ENCODE measurements at regions of chr1 and their contacts with region 1.

Region 1: GRCh38 chr1:45512641-45513054 is 9.0 kb downstream of the PRDX1 start:
- DNase-seq: peak; percentile 77
- ATAC-seq: peak; percentile 85
- H3K4me3 Mint-ChIP-seq: no peak overlapping the region
- H3K27ac Mint-ChIP-seq: no peak overlapping the region
- H3K4me1 Mint-ChIP-seq: peaks cover 11% of the 10 kb centered on the region
- H3K27me3 Mint-ChIP-seq: no peaks in the 10 kb centered on the region

Region 2: DNA sequence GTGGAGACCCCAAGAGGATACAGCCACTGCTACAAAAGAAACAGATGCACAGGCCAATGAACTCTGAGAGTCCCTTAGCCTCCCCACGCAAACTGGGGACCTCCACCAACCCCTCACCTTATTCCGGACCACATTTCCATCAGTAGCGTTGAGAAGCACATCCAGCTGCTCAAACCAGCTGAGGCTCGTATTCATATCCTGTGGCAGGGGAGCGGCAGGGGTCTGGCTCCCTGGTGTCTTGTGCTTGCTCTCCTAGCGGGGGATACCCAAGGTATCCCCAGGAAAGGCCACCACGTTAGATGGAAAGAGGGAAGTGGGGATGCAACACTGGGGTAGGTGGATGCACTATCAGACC is 13.3 kb before region 1 on chr1:
- CTCF ChIA-PET with region 1: interaction called, 22 read pairs
- POLR2A ChIA-PET with region 1: interaction called, 8 read pairs
- intact Hi-C with region 1: no loop called
- DNase-seq: peak; percentile 45
- ATAC-seq: no peak
- H3K4me3 Mint-ChIP-seq: peak overlapping the region; percentile 81
- H3K27ac Mint-ChIP-seq: peak overlapping the region; percentile 92
- H3K4me1 Mint-ChIP-seq: peaks cover 23% of the 10 kb centered on the region
- H3K27me3 Mint-ChIP-seq: no peaks in the 10 kb centered on the region

Region 3: DNA sequence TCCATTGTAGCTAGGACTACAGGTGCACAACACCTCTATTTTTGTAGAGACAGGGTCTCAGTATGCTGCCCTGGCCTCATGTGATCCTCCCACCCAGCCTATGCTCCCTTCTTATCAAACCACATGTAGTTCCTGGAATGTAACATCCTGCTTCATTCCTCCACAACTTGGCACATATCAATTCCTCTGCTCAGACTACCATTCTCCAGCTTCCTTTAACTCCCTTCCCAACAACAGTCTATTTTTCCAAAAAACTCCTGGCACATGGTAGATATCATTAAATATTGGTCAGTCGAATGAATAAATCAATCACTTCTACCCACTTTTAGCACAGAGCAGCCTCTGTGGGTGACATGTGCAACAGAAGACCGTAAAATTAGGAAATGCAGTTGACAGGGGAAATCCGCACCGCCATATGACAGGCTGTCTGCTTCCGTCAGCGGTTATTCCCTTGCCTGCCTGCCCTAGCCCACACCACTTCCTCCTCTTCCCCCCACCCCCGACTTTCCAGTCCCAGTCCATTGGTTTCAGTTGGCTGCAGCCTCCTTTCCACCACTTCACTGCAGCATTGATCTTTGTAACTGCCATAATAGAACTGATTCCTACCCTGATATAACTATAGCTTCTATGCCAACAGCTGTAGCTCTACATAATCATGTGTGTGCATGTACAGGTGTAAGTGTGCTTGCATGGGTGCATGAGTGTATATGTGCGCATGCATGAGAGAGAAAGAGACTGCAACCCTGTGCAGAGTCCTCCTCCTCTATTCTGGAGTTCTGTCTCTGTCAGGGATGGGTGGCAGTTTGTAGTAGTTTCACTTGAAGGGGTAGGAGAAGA is 31.2 kb after region 1 on chr1:
- CTCF ChIA-PET with region 1: interaction called, 13 read pairs
- POLR2A ChIA-PET with region 1: no interaction called
- intact Hi-C with region 1: no loop called
- DNase-seq: peak; percentile 81
- ATAC-seq: peak; percentile 92
- H3K4me3 Mint-ChIP-seq: peak overlapping the region; percentile 30
- H3K27ac Mint-ChIP-seq: peak overlapping the region; percentile 72
- H3K4me1 Mint-ChIP-seq: peaks cover 31% of the 10 kb centered on the region
- H3K27me3 Mint-ChIP-seq: no peaks in the 10 kb centered on the region

Region 4: DNA sequence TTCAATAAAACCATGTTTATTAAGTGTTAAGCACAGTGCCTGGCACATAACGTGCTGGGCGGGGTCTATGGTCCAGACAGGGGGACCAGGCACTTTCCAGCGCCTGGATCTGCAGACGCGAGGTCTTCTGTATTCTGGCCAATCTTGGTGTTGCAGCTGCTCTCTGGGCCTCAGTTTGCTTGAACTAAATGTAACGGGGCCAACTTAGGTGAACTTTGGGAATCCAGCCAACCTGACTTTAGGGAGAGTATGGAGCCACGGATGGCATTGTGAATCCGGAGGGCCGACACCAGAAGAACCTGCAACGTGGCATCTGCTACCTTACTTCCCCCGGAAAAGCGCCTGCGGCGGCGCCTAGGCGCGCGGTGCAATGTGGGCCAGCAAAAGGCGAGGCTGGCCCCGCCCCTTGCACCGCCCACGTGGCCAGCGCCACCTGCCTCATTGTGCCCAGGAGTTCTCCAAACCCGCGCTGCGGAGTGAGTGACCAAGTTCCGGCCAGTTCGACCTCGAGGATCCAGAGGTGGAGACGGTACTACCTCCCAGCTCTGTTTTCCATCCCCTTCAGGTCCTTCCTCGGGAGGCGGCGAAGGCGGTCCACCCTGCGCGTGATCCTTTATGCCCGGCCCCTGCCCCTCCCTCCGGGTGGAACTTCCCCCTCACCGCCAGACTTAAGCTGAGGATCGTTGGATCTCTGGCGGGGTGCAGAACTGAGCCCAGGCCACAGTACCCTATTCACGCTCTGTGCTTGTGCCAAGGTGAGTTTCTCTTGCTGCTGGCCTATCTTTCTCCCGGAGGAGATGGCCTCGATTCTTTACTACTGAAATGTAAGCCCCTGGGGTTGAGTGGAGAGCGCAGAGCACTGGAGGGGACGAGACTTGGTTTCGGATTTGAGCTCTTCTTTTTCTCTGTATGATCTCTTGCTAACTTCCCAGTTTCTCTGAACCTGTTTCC is 38.0 kb after region 1 on chr1 and contains the start of gene AKR1A1:
- CTCF ChIA-PET with region 1: interaction called, 13 read pairs
- POLR2A ChIA-PET with region 1: interaction called, 3 read pairs
- intact Hi-C with region 1: loop called in 1 of 2 experiments (anchors 2 kb)
- DNase-seq: peak; percentile 95
- ATAC-seq: peak; percentile 94
- H3K4me3 Mint-ChIP-seq: peak within 1 kb of the TSS; percentile 94
- H3K27ac Mint-ChIP-seq: peak within 1 kb of the TSS; percentile 94
- H3K4me1 Mint-ChIP-seq: peaks cover 16% of the 10 kb centered on the region
- H3K27me3 Mint-ChIP-seq: no peaks in the 10 kb centered on the region
- total RNA-seq, gene AKR1A1: 140 to 181 TPM

Region 5: DNA sequence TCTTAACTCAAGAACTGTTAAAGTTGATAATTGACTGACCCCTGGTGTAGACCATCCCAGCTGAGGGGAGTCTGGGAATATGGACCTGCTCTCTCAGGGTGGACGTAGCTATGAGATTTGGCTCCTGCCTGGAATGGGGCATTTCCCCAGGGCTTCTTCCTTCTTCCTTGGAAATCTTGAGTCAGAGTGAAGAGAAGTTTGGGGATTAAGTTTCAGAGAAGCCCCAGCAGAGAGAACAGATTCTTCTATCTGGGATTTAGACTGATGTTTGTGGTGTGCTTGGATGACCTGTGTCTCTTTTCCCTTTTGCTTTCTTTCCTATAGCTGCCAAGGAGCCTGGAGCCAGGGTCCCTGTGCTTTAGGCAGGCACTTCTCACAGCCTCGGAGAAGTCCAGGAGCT is 51.2 kb after region 1 on chr1:
- CTCF ChIA-PET with region 1: interaction called, 107 read pairs
- POLR2A ChIA-PET with region 1: no interaction called
- intact Hi-C with region 1: no loop called
- DNase-seq: no peak
- ATAC-seq: no peak
- H3K4me3 Mint-ChIP-seq: no peak overlapping the region
- H3K27ac Mint-ChIP-seq: no peak overlapping the region
- H3K4me1 Mint-ChIP-seq: peaks cover 5% of the 10 kb centered on the region
- H3K27me3 Mint-ChIP-seq: no peaks in the 10 kb centered on the region

Measured in activated CD4-positive, alpha-beta T cell treated with anti-CD3 and anti-CD28 coated beads for 36 hours (primary cell).